Gastrocnemius medialis (tissue), 4 donors: ENCODE measurements at regions of chr11 and their contacts with region 1.

Region 1: DNA sequence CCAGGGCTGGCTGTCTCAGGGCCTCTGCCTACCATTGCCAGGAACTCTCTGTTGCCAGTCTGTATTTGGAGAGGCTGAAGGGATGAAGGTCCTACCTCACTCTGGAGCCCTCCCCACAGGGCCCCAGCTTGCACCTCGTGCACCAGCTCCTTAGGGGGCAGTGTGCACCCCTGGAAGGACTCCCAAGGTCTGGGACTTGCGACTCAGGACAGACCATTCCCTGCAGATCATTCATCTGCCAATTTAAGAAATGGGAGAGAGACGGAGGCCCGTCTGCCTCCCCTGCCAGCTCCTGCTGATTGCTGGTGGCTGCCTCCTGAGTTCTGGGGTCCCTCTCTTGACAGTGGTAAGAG is 27.5 kb upstream of the MALAT1 start:
- DNase-seq: peak; percentile 83 to 97
- ATAC-seq: peak; percentile 55 to 58
- H3K4me3 ChIP-seq: peak overlapping the region; percentile 23 to 49 (median 40)
- H3K27ac ChIP-seq: peak overlapping the region; percentile 97 to 100 (median 98)
- H3K4me1 ChIP-seq: peaks cover 52% of the 10 kb centered on the region in 2 donors
- H3K27me3 ChIP-seq: no peaks in the 10 kb centered on the region
- CTCF ChIP-seq: peak; percentile 60 to 75 (median 72)
- POLR2A ChIP-seq: peak in 1 of 2 donors; percentile 29

Region 2: GRCh38 chr11:65454696-65455456 is 16.5 kb before region 1 on chr11:
- in situ Hi-C with region 1: no loop called
- intact Hi-C with region 1: loop called (anchors 2 kb)
- DNase-seq: peak; percentile 88 to 94
- ATAC-seq: peak; percentile 80 to 88
- H3K4me3 ChIP-seq: peak overlapping the region; percentile 55 to 74 (median 58)
- H3K27ac ChIP-seq: peak overlapping the region; percentile 87 to 93 (median 90)
- H3K4me1 ChIP-seq: peaks cover 12 to 16% of the 10 kb centered on the region in 2 donors
- H3K27me3 ChIP-seq: no peaks in the 10 kb centered on the region
- CTCF ChIP-seq: no peak
- POLR2A ChIP-seq: peak; percentile 83 to 95

Region 3: GRCh38 chr11:65506770-65507505 is 35.6 kb after region 1 on chr11:
- in situ Hi-C with region 1: loop called in 1 of 4 experiments (anchors 5 kb)
- intact Hi-C with region 1: loop called (anchors 1 kb)
- DNase-seq: peak in 1 of 2 donors; percentile 63
- ATAC-seq: peak; percentile 3 to 12
- H3K4me3 ChIP-seq: peak overlapping the region; percentile 18 to 93 (median 55)
- H3K27ac ChIP-seq: peak overlapping the region; percentile 91 to 99 (median 94)
- H3K4me1 ChIP-seq: peaks cover 38 to 46% of the 10 kb centered on the region in 2 donors
- H3K27me3 ChIP-seq: no peaks in the 10 kb centered on the region
- CTCF ChIP-seq: no peak
- POLR2A ChIP-seq: peak; percentile 24 to 56

Region 4: GRCh38 chr11:65512306-65512705 is 40.9 kb after region 1 on chr11:
- in situ Hi-C with region 1: loop called in 1 of 4 experiments (anchors 5 kb)
- intact Hi-C with region 1: loop called (anchors 1 kb)
- DNase-seq: no peak
- ATAC-seq: no peak
- H3K4me3 ChIP-seq: no peak overlapping the region
- H3K27ac ChIP-seq: no peak overlapping the region
- H3K4me1 ChIP-seq: peaks cover 9 to 17% of the 10 kb centered on the region in 2 donors
- H3K27me3 ChIP-seq: no peaks in the 10 kb centered on the region
- CTCF ChIP-seq: no peak
- POLR2A ChIP-seq: no peak